ENCODE measurements at regions of chr2 and their contacts with region 1.

Region 1: DNA sequence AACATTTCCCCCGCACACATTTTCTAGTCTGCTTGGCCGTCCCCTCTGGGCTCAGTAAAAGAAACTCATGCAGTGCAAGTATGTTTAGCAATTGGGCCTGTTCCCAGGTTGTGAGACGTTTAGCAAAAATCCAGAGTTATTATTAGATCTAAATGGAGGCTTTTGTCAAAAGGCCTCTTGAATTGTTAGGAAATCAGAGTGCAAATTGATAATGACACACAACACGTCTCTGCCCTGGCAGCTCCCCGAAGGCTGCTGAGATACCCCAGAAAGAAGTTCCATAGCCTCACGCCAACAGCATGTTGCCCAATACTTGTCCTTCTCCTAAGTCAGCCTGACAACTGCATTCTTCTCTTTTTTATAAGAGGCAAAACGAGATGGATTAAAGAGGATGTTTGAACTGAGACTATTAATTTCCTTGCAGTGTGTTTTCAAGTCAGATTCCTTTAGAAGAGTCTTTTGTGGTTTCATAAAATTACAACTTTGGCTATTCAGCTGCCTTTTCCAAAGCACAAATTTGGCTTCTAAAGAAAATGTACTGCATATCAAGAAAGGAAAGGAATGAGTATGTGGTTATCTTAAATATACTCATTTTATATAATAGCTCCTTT is 202.2 kb downstream of the TRIB2 start:
- DNase-seq: peak; percentile 91
- ATAC-seq: peak; percentile 96

Region 2: GRCh38 chr2:12819103-12819475 is 99.9 kb before region 1 on chr2:
- intact Hi-C with region 1: loop called (anchors 5 kb)
- DNase-seq: no peak
- ATAC-seq: peak; percentile 97

Region 3: GRCh38 chr2:12847694-12848575 is 71.0 kb before region 1 on chr2:
- intact Hi-C with region 1: loop called (anchors 5 kb)
- DNase-seq: no peak
- ATAC-seq: peak; percentile 62

Region 4: GRCh38 chr2:13240789-13241487 is 322.0 kb after region 1 on chr2:
- intact Hi-C with region 1: no loop called
- DNase-seq: no peak
- ATAC-seq: no peak